HCT116 (cell line): ENCODE measurements at regions of chr7 and their contacts with region 1.

Region 1: DNA sequence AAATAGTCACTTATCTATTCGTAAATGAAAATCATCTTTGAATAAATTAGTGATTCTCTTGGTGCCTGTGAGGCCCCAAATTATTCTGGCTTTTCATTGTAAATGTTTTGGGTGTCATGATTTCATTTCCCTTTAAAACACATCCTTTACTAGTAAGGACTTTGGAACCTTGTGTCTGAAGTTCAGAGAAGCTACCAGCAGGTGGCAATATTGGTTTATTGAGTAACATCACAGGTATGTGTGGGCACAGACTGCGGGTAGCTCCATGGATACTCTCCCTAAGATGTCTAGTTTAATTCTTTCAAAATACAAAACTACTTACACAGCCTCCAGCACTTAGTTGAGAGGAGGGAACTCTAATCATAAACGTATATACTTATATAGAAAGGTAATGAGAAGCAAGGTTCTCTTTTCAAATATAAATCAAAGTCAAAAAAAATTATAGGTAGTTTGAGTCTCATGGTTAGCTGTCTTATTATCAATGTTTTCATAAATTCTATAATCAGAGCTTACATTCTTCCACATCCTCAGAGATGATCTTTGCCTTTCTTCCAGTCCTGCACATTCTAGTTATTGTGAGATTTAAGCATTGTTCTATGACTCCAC is 449.6 kb downstream of the GRM8 start:
- DNase-seq: peak; percentile 68
- ATAC-seq: peak; percentile 98
- H3K4me3 ChIP-seq: no peak overlapping the region
- H3K27ac ChIP-seq: no peak overlapping the region
- H3K4me1 ChIP-seq: no peaks in the 10 kb centered on the region
- H3K27me3 ChIP-seq: no peaks in the 10 kb centered on the region
- CTCF ChIP-seq: peak; percentile 63 to 80 (median 63); a peak in 5 of 6 replicates
- POLR2A ChIP-seq: no peak
- RAD21 ChIP-seq: peak; percentile 82

Region 2: GRCh38 chr7:126727925-126728391 is 75.2 kb before region 1 on chr7:
- CTCF ChIA-PET with region 1: no interaction called
- POLR2A ChIA-PET with region 1: no interaction called
- RAD21 ChIA-PET with region 1: no interaction called
- intact Hi-C with region 1: no loop called
- DNase-seq: no peak
- ATAC-seq: peak; percentile 71
- H3K4me3 ChIP-seq: no peak overlapping the region
- H3K27ac ChIP-seq: no peak overlapping the region
- H3K4me1 ChIP-seq: peaks cover 0 to 11% of the 10 kb centered on the region in 2 experiments; a peak in 2 of 4 replicates
- H3K27me3 ChIP-seq: no peaks in the 10 kb centered on the region
- CTCF ChIP-seq: no peak
- POLR2A ChIP-seq: no peak
- RAD21 ChIP-seq: no peak

Region 3: DNA sequence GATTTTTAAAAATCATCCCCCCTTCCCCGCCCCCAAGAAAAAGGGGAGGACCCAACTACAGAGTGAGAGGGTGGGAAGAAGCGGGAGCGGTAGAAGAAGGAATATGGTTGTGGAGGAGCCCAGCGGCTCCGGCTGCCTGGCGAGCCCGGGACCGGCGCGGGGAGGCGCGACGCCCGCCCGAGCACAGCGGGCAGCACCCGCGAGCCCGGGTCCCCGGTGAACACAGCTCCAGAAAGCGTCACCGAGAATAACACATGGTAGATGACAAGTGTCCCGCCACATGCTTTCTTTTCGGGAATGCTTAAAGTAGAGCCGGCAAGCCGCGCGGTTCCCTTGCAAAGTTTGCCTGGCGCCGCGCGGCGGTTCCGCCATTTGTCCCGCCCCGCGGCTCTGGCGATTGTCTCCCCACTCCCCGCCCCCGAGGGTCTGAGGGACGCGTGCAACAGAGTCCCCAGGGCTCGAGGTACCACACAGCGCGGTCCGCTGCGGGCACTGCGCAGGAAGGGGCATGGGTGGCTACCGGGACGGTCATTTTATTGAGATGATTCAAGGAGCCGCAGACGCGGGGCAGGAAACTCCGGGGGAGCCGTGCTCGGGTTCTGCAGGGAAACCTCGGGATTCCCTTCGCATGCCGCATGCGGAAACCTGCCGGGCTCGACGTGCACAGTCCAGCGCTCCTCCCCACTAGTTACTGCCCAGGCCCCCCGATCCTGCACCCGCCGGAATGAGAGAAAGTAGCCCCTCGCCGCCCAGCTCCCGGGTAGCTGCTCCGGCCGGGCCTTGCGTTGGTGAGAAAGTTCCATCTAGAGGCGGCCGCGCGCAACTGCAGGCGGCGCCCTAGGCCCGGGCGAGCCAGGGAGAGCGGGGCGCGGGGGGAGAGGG is 450.4 kb after region 1 on chr7:
- CTCF ChIA-PET with region 1: interaction called, 10 read pairs
- POLR2A ChIA-PET with region 1: no interaction called
- RAD21 ChIA-PET with region 1: no interaction called
- intact Hi-C with region 1: loop called (anchors 1 kb)
- DNase-seq: peak; percentile 15
- ATAC-seq: peak; percentile 90
- H3K4me3 ChIP-seq: peak overlapping the region; percentile 55 to 66
- H3K27ac ChIP-seq: no peak overlapping the region
- H3K4me1 ChIP-seq: peaks cover 0 to 9% of the 10 kb centered on the region in 2 experiments; a peak in 1 of 4 replicates
- H3K27me3 ChIP-seq: peaks cover 52% of the 10 kb centered on the region
- CTCF ChIP-seq: peak; percentile 57 to 90 (median 85); a peak in 5 of 6 replicates
- POLR2A ChIP-seq: no peak
- RAD21 ChIP-seq: peak; percentile 73

Region 4: GRCh38 chr7:127447326-127447945 is 644.3 kb after region 1 on chr7:
- CTCF ChIA-PET with region 1: interaction called, 7 read pairs
- POLR2A ChIA-PET with region 1: no interaction called
- RAD21 ChIA-PET with region 1: no interaction called
- intact Hi-C with region 1: loop called (anchors 5 kb)
- DNase-seq: peak; percentile 74
- ATAC-seq: peak; percentile 100
- H3K4me3 ChIP-seq: no peak overlapping the region
- H3K27ac ChIP-seq: no peak overlapping the region
- H3K4me1 ChIP-seq: no peaks in the 10 kb centered on the region
- H3K27me3 ChIP-seq: peaks cover 18% of the 10 kb centered on the region
- CTCF ChIP-seq: peak; percentile 83 to 97 (median 86)
- POLR2A ChIP-seq: no peak
- RAD21 ChIP-seq: peak; percentile 80

Region 5: GRCh38 chr7:127514499-127514898 is 711.3 kb after region 1 on chr7:
- CTCF ChIA-PET with region 1: interaction called, 4 read pairs
- POLR2A ChIA-PET with region 1: no interaction called
- RAD21 ChIA-PET with region 1: no interaction called
- intact Hi-C with region 1: loop called (anchors 2 kb)
- DNase-seq: peak; percentile 29
- ATAC-seq: peak; percentile 89
- H3K4me3 ChIP-seq: no peak overlapping the region
- H3K27ac ChIP-seq: no peak overlapping the region
- H3K4me1 ChIP-seq: no peaks in the 10 kb centered on the region
- H3K27me3 ChIP-seq: peaks cover 60% of the 10 kb centered on the region
- CTCF ChIP-seq: peak; percentile 43 to 56 (median 45); a peak in 4 of 6 replicates
- POLR2A ChIP-seq: no peak
- RAD21 ChIP-seq: peak; percentile 71